Cardiac septum (tissue), 1 donor: ENCODE measurements at regions of chr1 and their contacts with region 1.

Region 1: DNA sequence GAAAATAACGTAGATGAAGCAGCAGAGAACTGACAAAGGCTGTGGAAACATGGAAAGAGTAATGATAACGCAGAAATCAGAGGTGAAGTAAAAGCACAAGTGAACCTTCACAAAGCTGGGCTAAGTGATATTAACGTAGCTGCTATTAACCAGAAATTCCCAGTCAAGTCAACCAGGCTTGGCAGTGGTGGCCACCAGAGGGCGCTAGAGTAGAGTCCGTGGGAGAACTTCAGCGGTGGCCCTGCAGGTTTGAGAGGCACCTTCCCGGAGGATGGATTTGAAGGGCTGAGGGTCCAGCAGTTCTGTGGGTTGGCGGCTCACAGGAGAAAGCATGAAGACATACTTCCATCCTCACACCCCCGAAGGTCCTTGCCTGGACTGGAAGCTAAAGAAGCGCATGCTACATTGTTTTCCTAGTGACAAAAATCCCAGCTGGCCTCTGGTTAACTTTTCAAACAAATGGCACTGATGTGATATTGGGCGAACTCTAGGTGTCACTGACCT is 81.7 kb upstream of the ZNF648 start:
- DNase-seq: peak; percentile 95

Region 2: DNA sequence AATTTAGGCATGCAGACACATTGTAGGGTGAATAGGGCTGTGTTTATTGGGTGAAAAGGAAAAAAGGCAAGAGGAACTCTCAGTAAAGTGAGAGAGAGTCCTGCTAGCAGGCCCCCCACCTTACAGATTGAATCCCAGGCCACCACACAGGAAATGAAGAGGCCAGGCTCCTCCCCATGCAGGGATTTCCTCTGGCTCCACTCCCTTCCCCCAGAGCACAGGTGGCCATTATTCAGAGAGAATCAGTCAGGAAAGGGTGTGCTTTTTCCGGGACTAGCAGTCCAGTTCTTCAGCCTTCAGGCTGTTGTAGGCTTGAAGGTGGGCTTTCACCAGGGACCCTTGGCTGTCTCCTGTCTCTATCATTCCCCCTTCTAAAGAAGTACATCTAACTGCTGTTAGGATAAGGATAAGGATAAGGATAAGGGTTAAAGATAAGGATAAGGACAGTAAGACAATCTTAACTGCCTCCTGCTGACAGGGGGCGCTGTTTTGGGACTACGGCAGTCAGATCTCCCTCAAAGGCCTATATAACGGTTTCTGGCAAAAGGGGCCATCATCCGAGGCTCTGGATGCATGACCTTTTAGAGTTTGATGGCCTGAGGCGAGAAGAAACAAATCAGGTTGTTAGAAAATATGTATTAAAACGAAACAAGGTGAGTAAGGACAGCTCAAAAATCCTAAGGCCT is 108.0 kb before region 1 on chr1:
- intact Hi-C with region 1: no loop called
- DNase-seq: no peak

Region 3: DNA sequence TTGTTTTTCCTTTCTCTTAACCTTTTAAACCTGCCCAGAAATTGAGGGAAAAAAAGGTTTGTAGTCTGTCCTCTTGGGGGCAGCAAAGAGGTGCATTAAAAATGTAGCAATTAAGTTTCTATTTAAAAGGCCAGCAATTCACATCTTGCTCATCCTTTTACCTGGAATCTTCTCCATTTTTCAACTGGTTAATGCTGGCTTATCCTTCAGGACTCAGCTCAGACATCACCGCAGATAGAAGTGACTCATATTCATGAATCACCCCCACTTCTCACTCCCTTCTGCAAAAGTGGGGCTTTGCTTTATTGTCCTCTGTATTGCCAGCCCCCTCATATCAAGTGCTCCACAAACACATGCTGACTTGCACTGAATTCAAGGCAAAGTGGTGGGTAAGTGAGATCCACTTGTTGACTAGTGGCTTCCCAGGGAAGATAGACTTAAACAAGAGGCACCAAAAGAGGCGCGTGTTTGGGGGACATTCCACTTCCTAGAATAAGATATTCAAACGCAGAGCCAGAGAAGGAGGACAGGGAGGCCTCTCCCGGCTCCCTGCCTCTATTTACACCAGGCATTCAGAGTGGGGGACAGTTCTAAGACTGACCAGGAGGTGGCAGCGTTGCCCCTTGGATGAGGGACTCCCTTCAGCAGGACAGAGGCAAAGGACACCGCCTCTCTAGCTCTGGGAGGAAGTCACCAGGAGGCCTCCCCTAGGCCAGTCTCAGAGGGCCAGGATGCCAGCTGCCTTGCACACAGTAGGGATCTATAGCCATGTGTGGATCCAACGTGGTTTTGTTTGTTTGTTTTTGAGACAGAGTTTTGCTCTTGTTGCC is 58.5 kb before region 1 on chr1:
- intact Hi-C with region 1: loop called (anchors 2 kb)
- DNase-seq: peak; percentile 93

Region 4: DNA sequence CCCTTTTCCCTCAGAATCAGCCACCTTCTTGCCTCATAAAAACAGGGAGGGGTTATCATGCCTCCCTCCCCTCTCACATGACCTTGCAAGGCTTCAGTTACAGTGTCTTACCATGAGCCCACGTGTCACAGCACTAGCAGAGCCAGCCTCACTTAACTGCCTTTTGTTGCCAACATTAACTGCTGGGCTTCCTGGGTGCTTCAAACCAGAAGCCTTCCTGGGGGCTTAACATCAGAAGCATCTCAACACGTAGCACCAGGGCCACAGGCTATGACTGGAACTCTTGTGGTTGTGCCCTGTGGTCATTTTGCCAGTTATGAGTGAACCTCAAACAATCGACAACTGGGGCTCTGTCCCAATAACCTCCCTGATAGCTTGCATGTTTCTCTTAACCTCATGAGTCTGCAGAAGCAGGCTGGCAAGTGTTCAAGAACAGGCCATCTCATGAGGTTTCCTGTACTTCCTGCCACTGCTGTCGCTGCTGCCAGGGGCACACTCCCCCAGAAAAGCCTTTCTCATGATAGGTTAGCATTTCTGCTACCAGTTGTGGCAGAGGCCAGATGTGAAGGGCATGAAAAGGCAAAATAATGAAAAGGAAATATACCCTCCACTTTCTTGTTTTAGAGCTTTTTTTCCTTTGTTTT is 116.1 kb after region 1 on chr1:
- intact Hi-C with region 1: loop called (anchors 10 kb)
- DNase-seq: no peak

Region 5: GRCh38 chr1:182301467-182302198 is 158.4 kb after region 1 on chr1:
- intact Hi-C with region 1: loop called (anchors 5 kb)
- DNase-seq: no peak